Activated CD4-positive, alpha-beta T cell treated with anti-CD3 and anti-CD28 coated beads for 36 hours (primary cell): ENCODE measurements at regions of chr5 and their contacts with region 1.

Region 1: DNA sequence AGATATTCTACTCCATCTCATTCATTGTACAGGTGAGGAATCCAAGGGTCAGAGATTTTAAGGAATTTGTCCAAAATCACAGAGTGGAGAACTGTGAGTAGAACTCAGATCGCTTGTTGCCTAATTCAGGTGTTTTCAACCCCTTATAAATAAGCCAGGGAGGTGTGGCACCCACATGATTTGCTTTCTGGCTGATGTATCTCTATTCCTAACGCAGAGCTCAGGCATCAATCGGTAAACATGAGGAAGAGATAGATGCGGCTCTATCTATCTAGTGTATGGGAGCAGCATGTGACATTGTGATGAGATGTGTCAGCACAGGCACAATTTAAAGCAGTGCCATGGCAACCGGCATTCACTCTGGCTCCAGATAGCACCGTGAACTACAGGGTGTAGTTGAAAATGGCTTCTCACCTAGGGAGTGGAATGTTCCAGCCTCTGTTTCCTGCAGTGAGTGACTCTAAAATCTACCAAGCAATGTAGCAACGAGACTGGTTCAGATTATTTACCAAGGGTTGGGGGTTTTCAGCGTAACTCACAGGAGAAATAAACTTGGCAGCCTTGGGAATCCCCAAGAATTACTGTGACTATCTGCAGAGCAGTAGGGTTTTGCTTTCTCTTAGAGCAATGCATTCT is 53.4 kb upstream of the SUB1 start:
- DNase-seq: peak; percentile 77
- ATAC-seq: peak; percentile 84
- H3K4me3 Mint-ChIP-seq: peak overlapping the region; percentile 82
- H3K27ac Mint-ChIP-seq: peak overlapping the region; percentile 94
- H3K4me1 Mint-ChIP-seq: peaks cover 54% of the 10 kb centered on the region
- H3K27me3 Mint-ChIP-seq: no peaks in the 10 kb centered on the region

Region 2: GRCh38 chr5:32206509-32207354 is 325.3 kb before region 1 on chr5:
- CTCF ChIA-PET with region 1: no interaction called
- POLR2A ChIA-PET with region 1: no interaction called
- intact Hi-C with region 1: loop called in 1 of 2 experiments (anchors 2 kb)
- DNase-seq: no peak
- ATAC-seq: no peak
- H3K4me3 Mint-ChIP-seq: no peak overlapping the region
- H3K27ac Mint-ChIP-seq: peak overlapping the region; percentile 82
- H3K4me1 Mint-ChIP-seq: peaks cover 39% of the 10 kb centered on the region
- H3K27me3 Mint-ChIP-seq: peaks cover under 1% of the 10 kb centered on the region

Region 3: DNA sequence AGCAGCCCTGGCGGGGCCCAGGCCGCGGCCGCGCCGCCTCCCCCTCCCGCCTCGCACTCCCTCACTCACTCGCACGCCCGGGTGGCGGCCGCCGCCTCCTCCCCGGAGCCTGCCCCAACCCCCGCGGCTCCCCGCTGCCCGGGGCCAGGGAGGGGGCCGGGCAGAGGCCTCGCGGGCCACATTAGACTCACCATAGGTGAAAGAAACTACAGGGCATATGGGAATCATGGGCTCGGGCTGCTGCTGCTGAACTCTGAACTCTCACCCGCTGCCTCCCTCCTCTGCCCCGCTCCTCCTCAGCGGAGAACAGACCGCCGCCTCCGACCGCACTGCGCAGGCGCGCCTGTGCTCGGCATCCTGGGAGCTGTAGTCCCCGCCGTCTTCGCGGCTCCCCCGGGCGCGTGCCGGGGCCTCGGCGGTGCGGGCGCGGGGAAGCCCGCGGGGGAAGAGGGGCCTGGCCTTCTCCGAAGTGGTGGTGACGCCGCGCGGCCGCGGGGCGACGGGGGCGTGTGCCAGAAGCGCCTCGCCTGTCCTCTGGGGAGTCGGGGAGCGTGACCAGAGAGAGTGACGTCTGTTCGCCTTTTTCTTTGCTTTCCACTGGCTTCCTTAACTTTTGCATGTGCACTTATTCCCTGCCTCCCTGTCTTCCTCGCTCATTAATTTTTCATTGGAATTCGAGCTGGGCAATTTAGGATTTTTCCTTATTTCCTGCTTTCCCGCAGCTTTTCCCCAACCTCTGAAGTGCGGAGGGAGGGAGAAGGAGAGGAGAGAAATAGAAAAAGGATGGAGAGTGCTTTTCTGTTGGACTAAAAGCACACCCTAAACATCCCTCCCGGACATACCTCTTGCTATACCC is 87.3 kb before region 1 on chr5 and contains the start of gene ZFR:
- CTCF ChIA-PET with region 1: interaction called, 3 read pairs
- POLR2A ChIA-PET with region 1: interaction called, 5 read pairs
- intact Hi-C with region 1: loop called (anchors 1 to 5 kb)
- DNase-seq: peak; percentile 97
- ATAC-seq: peak; percentile 90
- H3K4me3 Mint-ChIP-seq: peak within 1 kb of the TSS; percentile 99
- H3K27ac Mint-ChIP-seq: peak within 1 kb of the TSS; percentile 99
- H3K4me1 Mint-ChIP-seq: peaks cover 34% of the 10 kb centered on the region
- H3K27me3 Mint-ChIP-seq: no peaks in the 10 kb centered on the region
- total RNA-seq, gene ZFR: 60.6 to 81.4 TPM

Region 4: DNA sequence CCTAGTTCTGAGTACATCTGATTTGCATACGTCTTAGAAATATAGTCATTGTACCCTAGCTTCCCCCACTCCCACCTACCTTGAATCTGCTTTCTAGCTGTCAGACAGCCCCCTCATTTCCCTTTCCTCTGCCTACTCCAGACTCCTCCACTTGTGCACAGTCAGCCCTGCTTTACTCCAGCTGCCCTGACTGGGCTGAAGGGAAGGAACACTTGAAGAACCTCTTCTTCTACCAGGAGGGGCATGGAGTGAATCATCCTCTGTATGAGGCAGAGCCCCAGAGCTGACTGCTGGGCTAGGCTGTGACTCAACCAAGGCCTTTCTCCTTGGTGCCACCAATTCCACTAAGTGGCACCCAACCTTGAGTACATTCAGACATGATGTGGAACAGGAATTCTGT is 69.4 kb before region 1 on chr5:
- CTCF ChIA-PET with region 1: no interaction called
- POLR2A ChIA-PET with region 1: interaction called, 6 read pairs
- intact Hi-C with region 1: loop called in 1 of 2 experiments (anchors 2 kb)
- DNase-seq: peak; percentile 73
- ATAC-seq: peak; percentile 100
- H3K4me3 Mint-ChIP-seq: no peak overlapping the region
- H3K27ac Mint-ChIP-seq: peak overlapping the region; percentile 90
- H3K4me1 Mint-ChIP-seq: peaks cover 17% of the 10 kb centered on the region
- H3K27me3 Mint-ChIP-seq: no peaks in the 10 kb centered on the region

Region 5: DNA sequence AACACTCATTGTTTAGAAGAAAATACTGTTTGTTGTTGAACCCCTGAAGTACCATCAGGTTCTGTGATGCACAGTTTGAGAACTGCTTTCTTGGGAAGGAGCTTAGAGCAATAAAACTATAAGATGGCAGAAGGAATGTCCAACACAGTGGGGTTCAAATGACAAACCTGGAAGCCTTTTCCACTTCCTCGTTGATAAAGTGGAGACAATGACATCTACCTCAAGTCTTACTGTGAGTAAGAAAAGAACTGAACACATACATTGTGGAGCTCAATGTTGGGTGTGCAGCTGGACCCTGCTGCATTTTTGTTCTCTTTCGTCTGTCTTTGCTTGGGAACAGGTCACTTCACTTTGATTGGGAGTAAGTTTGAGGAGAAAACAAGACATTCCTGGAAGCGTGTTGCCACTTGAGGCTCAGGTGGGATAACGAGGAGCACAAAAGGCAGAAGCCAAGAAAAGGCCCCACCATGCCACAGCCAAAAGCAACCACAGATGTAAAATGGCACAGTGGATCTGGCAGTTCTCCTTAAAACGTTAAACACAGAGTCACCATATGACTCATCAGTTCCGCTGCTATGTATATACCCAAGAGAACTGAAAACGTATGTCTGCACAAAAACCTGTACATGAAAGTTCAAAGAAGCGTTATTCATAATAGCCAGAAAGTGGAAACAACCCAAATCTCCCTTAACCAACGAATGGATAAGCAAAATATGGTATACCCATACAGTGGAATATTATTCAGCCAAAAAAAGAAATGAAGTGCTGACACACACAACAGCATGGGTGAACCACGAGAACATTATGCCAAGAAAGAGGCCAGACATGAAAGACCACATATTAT is 10.4 kb after region 1 on chr5:
- CTCF ChIA-PET with region 1: interaction called, 3 read pairs
- POLR2A ChIA-PET with region 1: no interaction called
- intact Hi-C with region 1: loop called (anchors 1 kb)
- DNase-seq: peak; percentile 61
- ATAC-seq: peak; percentile 82
- H3K4me3 Mint-ChIP-seq: peak overlapping the region; percentile 36
- H3K27ac Mint-ChIP-seq: peak overlapping the region; percentile 95
- H3K4me1 Mint-ChIP-seq: peaks cover 52% of the 10 kb centered on the region
- H3K27me3 Mint-ChIP-seq: no peaks in the 10 kb centered on the region

Region 6: DNA sequence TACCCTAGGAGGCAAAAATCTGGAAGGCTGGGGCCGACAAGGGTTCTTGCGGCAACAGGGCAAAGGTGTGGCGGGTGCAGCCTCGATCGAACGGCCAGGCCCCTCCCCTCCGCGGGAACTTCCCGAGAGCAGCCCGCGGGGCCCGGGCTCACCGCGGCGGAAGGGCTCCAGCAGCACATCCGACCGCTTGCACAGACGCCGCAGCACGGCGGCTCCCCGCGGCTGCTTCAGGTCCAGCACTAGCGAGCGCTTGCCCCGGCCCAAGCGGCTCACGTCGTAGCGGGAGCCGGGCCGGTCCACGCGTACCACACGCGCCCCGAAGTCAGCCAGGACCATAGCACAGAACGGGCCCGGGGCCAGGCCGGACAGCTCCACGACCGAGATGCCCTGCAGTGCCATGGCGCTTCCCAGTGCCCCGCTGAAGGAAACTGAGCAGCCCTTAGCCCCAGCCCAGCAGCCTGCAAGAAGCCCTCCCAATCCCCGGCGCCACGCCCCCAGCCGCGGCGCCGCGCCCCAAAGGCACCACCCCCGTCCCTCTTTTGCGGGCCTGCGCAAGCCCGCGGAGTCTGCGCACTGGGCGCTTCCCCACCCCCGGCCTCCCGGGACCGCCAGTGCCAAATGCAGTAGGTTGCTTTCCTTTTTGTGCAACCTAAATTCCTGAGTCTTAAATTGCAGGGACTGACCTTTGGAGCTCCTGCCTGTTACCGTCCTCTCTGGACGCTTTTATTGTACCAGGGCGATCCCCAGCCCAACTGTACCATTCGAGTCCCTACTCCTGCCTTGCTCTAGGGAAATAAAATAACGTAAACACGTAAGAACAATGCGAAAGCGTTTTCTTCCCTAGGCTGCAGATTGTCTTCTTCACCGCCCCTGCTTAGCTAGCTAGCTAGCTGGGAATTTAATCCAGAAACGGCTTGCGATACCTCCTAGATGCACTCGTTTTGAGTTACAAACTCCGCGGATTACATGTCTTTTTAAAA is 1475.9 kb after region 1 on chr5 and contains the start of gene AMACR:
- CTCF ChIA-PET with region 1: no interaction called
- POLR2A ChIA-PET with region 1: no interaction called
- intact Hi-C with region 1: loop called in 1 of 2 experiments (anchors 5 kb)
- DNase-seq: peak; percentile 96
- ATAC-seq: peak; percentile 95
- H3K4me3 Mint-ChIP-seq: peak within 1 kb of the TSS; percentile 77
- H3K27ac Mint-ChIP-seq: peak within 1 kb of the TSS; percentile 90
- H3K4me1 Mint-ChIP-seq: peaks cover 32% of the 10 kb centered on the region
- H3K27me3 Mint-ChIP-seq: no peaks in the 10 kb centered on the region
- total RNA-seq, gene AMACR: 3.3 to 6.0 TPM